Naive thymus-derived CD8-positive, alpha-beta T cell (primary cell): ENCODE measurements at regions of chr12 and their contacts with region 1.

Region 1: GRCh38 chr12:8038659-8039114 is 6.2 kb downstream of the FOXJ2 start:
- DNase-seq: peak in 3 of 10 donors; percentile 11 to 39 (median 34)
- ATAC-seq: peak; percentile 70
- H3K4me3 Mint-ChIP-seq: peak overlapping the region; percentile 56 to 91 (median 83)
- H3K27ac Mint-ChIP-seq: peak overlapping the region; percentile 61 to 94 (median 79)
- H3K4me1 Mint-ChIP-seq: peaks cover 44 to 66% (median 62%) of the 10 kb centered on the region in 4 donors
- H3K27me3 Mint-ChIP-seq: no peaks in the 10 kb centered on the region

Region 2: GRCh38 chr12:8026291-8026900 is 12.3 kb before region 1 on chr12:
- POLR2A ChIA-PET with region 1: interaction called, 28 read pairs
- DNase-seq: peak; percentile 78 to 99 (median 97)
- ATAC-seq: peak; percentile 89 to 91
- H3K4me3 Mint-ChIP-seq: peak overlapping the region; percentile 89 to 98 (median 96)
- H3K27ac Mint-ChIP-seq: peak overlapping the region; percentile 99 to 100 (median 100)
- H3K4me1 Mint-ChIP-seq: peaks cover 3 to 20% (median 12%) of the 10 kb centered on the region in 4 donors
- H3K27me3 Mint-ChIP-seq: no peaks in the 10 kb centered on the region

Region 3: GRCh38 chr12:8052679-8053078 is 14.0 kb after region 1 on chr12:
- POLR2A ChIA-PET with region 1: no interaction called
- DNase-seq: no peak
- ATAC-seq: no peak
- H3K4me3 Mint-ChIP-seq: no peak overlapping the region
- H3K27ac Mint-ChIP-seq: peak overlapping the region in 3 of 10 donors; percentile 24 to 66 (median 46)
- H3K4me1 Mint-ChIP-seq: peaks cover 0 to 15% (median 1%) of the 10 kb centered on the region in 4 donors
- H3K27me3 Mint-ChIP-seq: no peaks in the 10 kb centered on the region